Heart left ventricle (tissue), 16 donors: ENCODE measurements at regions of chr15 and their contacts with region 1.

Region 1: GRCh38 chr15:25053000-25053815 is 98.4 kb downstream of the SNRPN start:
- DNase-seq: peak in 1 of 5 donors; percentile 7
- ATAC-seq: no peak
- H3K4me3 ChIP-seq: no peak overlapping the region
- H3K27ac ChIP-seq: no peak overlapping the region
- H3K4me1 ChIP-seq: no peaks in the 10 kb centered on the region
- H3K27me3 ChIP-seq: no peaks in the 10 kb centered on the region
- CTCF ChIP-seq: no peak
- POLR2A ChIP-seq: no peak

Region 2: DNA sequence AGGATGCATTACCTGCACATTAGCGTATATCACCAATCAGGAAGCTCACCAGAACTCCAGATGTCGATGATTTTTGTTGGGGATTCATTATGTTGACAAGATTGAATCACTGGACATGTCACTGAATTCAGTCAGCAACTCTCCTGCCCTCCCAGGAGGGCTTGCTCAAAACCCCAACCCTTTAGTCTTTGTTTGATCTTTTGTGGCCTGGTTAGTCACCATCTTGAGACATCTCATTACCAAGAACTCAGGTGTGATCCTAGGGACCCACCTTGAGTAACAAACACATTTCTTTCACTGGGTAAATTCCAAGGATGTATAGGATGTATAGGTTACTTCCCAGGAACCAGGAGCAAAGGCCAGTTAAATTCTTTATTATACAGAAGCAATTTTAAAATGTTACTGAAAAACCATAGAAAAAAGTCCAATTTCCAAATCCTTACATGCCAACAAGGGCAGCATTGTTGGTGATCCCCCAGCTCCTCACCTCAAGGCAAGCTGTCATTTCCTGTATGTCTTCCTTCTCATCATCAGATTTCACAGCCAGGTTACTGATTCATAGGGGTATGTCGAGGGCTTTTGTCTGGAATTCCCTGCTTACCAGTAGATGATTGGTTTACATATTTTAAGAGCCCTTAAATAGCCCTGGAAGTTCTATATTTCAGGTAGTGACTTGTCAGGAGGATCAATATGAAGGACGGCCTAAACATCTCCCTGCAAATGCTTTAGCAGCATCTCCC is 86.7 kb before region 1 on chr15:
- intact Hi-C with region 1: no loop called
- DNase-seq: no peak
- ATAC-seq: no peak
- H3K4me3 ChIP-seq: no peak overlapping the region
- H3K27ac ChIP-seq: no peak overlapping the region
- H3K4me1 ChIP-seq: peaks cover 0 to 2% (median 0%) of the 10 kb centered on the region in 12 donors
- H3K27me3 ChIP-seq: no peaks in the 10 kb centered on the region
- CTCF ChIP-seq: no peak
- POLR2A ChIP-seq: no peak

Region 3: GRCh38 chr15:24985224-24985623 is 68.0 kb before region 1 on chr15:
- intact Hi-C with region 1: loop called in 1 of 10 experiments (anchors 10 kb)
- DNase-seq: no peak
- ATAC-seq: peak in 3 of 4 donors; percentile 27 to 49 (median 35)
- H3K4me3 ChIP-seq: no peak overlapping the region
- H3K27ac ChIP-seq: no peak overlapping the region
- H3K4me1 ChIP-seq: peaks cover 0 to 5% (median 0%) of the 10 kb centered on the region in 12 donors
- H3K27me3 ChIP-seq: no peaks in the 10 kb centered on the region
- CTCF ChIP-seq: no peak
- POLR2A ChIP-seq: no peak

Region 4: GRCh38 chr15:25089577-25089976 is 36.4 kb after region 1 on chr15:
- intact Hi-C with region 1: loop called in 1 of 10 experiments (anchors 5 kb)
- DNase-seq: no peak
- ATAC-seq: peak; percentile 15 to 48 (median 32)
- H3K4me3 ChIP-seq: no peak overlapping the region
- H3K27ac ChIP-seq: no peak overlapping the region
- H3K4me1 ChIP-seq: peaks cover 0 to 6% (median 0%) of the 10 kb centered on the region in 12 donors
- H3K27me3 ChIP-seq: no peaks in the 10 kb centered on the region
- CTCF ChIP-seq: no peak
- POLR2A ChIP-seq: no peak

Region 5: DNA sequence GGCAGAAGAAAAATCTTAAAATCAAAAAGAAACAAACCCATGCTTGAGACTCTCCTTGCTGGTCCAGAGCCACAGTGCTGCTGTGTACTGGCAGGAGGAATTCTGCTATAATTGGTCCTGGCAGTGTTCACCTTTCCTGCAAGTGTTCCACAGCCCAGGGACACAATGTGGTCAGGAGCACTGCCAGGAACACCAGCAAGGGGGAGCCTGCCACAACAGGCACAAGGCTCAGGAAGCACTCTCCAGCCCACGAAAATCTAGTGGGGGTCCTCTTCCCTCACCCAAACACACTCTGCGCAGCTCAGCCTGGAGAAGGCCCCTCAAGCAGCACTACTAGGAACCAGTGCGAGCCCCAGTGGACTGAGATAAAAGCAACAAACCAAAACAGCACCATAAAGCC is 292.7 kb after region 1 on chr15:
- intact Hi-C with region 1: no loop called
- DNase-seq: peak; percentile 57 to 82 (median 66)
- ATAC-seq: peak; percentile 99
- H3K4me3 ChIP-seq: peak overlapping the region in 1 of 12 donors; percentile 22
- H3K27ac ChIP-seq: peak overlapping the region in 10 of 12 donors; percentile 1 to 78 (median 44)
- H3K4me1 ChIP-seq: peaks cover 0 to 16% (median 0%) of the 10 kb centered on the region in 12 donors
- H3K27me3 ChIP-seq: no peaks in the 10 kb centered on the region
- CTCF ChIP-seq: peak in 11 of 12 donors; percentile 13 to 58 (median 42)
- POLR2A ChIP-seq: no peak